SK-N-SH (cell line): ENCODE measurements at regions of chr1 and their contacts with region 1.

Region 1: DNA sequence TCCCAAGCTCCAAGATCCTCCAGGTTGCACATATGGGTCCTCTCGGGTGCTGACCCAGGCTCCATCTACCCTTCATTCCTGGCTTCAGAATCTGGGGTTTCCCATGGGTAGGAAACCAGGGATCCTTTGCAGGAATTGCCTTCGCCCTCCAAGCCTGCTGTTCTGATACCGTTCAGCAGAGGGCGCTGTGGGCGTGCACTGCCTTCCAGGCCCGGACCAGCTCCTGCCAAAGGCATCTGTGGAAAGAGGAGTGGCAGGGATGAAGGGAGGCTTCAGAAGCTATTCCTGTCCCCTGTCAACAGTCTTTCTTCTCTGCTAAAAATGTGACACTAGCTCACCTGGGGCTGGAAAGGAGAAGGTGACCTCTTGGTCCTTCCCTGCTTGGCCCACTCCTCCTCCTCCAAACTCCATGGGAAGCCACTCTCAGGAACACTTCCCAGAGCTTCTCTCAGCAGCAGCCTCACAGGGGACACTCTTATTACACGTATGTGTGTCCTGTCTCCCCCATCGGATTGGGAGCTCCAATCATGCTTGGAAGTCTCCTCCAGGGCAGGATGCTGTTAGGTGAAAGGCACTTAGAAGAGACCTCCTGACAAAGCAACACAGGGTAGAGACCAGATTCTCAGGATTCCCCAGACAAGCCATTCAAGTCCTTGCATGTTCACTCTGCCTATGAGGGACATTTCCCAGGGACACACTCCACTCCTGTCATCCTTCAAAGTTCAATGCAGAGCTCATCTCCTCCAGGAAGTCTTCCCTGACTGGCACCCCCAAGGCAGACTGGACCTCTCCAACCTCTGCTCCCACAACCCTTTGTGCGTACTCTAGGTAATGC is 71.3 kb downstream of the VWA5B1 start:
- DNase-seq: peak; percentile 79
- H3K4me3 ChIP-seq: no peak overlapping the region; a peak in 1 of 4 replicates
- H3K27ac ChIP-seq: no peak overlapping the region
- H3K4me1 ChIP-seq: peaks cover 0 to 19% of the 10 kb centered on the region in 2 experiments; a peak in 2 of 4 replicates
- H3K27me3 ChIP-seq: peaks cover 27% of the 10 kb centered on the region
- CTCF ChIP-seq: peak; percentile 70
- EP300 ChIP-seq: no peak
- RAD21 ChIP-seq: peak; percentile 77

Region 2: GRCh38 chr1:20233394-20233793 is 128.6 kb before region 1 on chr1:
- CTCF ChIA-PET with region 1: interaction called, 15 read pairs
- POLR2A ChIA-PET with region 1: no interaction called
- DNase-seq: peak; percentile 55
- H3K4me3 ChIP-seq: no peak overlapping the region
- H3K27ac ChIP-seq: no peak overlapping the region
- H3K4me1 ChIP-seq: peaks cover 0 to 13% of the 10 kb centered on the region in 2 experiments; a peak in 2 of 4 replicates
- H3K27me3 ChIP-seq: peaks cover 12% of the 10 kb centered on the region; the same call in 1 of the 2 replicates
- CTCF ChIP-seq: peak; percentile 52
- EP300 ChIP-seq: no peak
- RAD21 ChIP-seq: peak; percentile 55

Region 3: DNA sequence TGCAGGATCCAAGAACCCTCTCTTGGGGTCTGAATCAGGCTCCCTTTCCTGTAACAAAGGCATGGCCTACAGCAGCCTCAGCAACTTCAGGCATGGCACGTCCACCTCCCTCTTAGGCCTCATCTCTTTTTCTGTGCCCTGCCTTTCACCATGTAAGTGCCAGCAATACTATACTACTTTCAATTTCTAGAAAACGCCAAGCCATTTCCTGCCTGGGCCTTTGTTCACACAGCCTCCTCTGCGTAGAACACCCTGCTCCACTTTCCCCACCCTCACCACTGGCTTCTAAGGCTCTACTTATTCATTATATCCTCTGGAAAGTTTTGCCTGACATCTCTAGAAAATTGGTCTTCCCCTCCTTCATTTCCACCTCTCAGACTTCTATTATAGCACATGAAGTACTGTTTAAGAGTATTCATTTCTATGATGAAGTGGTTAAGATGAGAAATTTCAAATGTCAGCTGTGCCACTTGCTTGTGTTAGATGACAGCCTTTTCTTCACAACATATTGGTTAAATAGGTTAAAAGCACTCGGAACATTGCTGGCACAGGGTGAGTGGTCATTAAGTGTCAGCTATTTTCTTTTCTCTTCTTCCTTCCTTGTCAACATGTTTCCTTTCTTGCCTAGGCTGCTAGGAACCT is 112.9 kb before region 1 on chr1:
- CTCF ChIA-PET with region 1: no interaction called
- POLR2A ChIA-PET with region 1: no interaction called
- DNase-seq: no peak
- H3K4me3 ChIP-seq: no peak overlapping the region
- H3K27ac ChIP-seq: no peak overlapping the region
- H3K4me1 ChIP-seq: peaks cover 0 to 3% of the 10 kb centered on the region in 2 experiments; a peak in 1 of 4 replicates
- H3K27me3 ChIP-seq: no peaks in the 10 kb centered on the region
- CTCF ChIP-seq: no peak
- EP300 ChIP-seq: no peak
- RAD21 ChIP-seq: no peak

Region 4: GRCh38 chr1:20322081-20322824 is 39.8 kb before region 1 on chr1:
- CTCF ChIA-PET with region 1: interaction called, 12 read pairs
- POLR2A ChIA-PET with region 1: no interaction called
- DNase-seq: no peak
- H3K4me3 ChIP-seq: no peak overlapping the region
- H3K27ac ChIP-seq: no peak overlapping the region
- H3K4me1 ChIP-seq: peaks cover 0 to 41% of the 10 kb centered on the region in 2 experiments; a peak in 2 of 4 replicates
- H3K27me3 ChIP-seq: peaks cover 5% of the 10 kb centered on the region; the same call in 1 of the 2 replicates
- CTCF ChIP-seq: no peak
- EP300 ChIP-seq: no peak
- RAD21 ChIP-seq: no peak

Region 5: DNA sequence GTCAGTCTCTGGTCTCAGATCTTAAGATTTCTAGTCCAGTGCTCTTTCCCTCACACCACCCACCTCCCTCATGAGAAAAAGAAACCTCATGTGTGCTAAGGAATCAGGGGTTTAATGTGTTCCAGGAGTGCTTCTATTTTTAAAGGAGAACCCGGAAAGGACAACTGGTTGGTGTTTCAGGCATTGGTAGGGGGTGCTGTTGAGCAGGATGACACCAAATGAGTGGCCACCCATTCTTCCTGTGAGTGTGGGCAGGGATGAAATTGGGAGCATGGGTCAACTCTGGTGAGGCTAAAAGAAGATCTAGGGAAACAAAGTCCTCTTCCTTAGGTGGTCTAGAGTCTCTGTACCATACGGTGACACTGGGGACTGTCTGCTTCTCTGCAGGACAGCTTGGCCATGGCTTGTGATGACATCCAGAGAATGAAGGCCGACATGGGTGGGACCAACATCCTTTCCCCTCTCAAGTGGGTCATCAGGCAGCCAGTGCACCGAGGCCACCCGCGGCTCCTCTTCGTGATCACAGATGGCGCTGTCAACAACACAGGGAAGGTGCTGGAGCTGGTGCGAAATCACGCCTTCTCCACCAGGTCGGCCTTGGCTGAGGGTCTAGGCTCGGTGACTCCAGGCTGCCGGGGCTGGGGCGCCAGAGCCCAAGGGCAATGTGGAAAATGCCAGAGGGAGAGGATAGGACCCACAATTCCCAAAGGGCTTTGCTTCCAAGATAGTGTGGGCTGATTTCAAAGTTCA is 32.1 kb before region 1 on chr1:
- CTCF ChIA-PET with region 1: interaction called, 12 read pairs
- POLR2A ChIA-PET with region 1: no interaction called
- DNase-seq: no peak
- H3K4me3 ChIP-seq: no peak overlapping the region
- H3K27ac ChIP-seq: no peak overlapping the region
- H3K4me1 ChIP-seq: peaks cover 0 to 15% of the 10 kb centered on the region in 2 experiments; a peak in 2 of 4 replicates
- H3K27me3 ChIP-seq: no peaks in the 10 kb centered on the region
- CTCF ChIP-seq: peak; percentile 19; the same call in 1 of the 2 replicates
- EP300 ChIP-seq: no peak
- RAD21 ChIP-seq: peak; percentile 12; the same call in 1 of the 2 replicates

Region 6: DNA sequence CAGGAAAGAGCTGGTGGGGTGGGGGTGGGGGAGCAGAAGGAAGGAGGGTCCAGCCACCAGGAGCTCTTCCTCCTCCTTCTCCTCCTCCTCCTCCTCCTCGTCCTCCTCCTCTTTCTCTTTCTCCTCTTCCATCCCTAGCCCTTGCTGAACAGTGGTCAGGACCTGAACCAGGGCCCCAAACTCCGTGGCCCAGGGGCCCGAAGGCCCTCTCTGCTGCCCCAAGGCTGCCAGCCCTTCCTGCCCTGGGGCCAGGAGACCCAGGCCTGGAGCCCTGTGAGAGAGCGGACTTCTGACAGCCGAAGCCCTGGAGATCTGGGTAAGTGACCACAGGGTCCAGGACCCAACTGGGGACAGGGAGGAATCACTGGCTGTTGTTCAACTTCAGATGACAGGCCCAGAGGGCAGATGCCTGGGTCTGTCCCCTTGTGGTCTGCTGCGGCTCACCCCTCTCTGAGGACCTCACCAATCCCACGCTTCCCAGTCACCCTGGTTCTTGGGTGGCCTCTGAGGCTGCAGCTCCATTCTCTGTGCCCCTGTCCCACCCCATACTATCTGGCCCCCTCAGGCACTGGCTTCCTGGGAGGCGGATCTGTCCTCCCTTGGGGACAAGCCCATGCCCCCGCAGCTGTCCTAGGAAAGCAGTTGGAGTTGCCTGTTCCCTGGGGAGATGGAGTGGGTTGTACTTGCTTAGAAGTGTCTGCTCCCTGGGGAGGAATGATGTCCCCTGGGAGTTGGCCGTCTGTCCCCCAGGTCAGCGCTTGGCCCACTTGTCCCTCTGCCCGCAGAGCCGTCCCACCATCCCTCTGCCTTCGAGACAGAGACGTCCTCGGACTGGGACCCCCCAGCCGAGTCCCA is 19.5 kb before region 1 on chr1:
- CTCF ChIA-PET with region 1: interaction called, 13 read pairs
- POLR2A ChIA-PET with region 1: no interaction called
- DNase-seq: peak; percentile 51
- H3K4me3 ChIP-seq: no peak overlapping the region; a peak in 1 of 4 replicates
- H3K27ac ChIP-seq: peak overlapping the region in 1 of 2 experiments; percentile 81; a peak in 1 of 4 replicates
- H3K4me1 ChIP-seq: peaks cover 0 to 30% of the 10 kb centered on the region in 2 experiments; a peak in 2 of 4 replicates
- H3K27me3 ChIP-seq: no peaks in the 10 kb centered on the region
- CTCF ChIP-seq: no peak
- EP300 ChIP-seq: no peak
- RAD21 ChIP-seq: no peak

Region 7: DNA sequence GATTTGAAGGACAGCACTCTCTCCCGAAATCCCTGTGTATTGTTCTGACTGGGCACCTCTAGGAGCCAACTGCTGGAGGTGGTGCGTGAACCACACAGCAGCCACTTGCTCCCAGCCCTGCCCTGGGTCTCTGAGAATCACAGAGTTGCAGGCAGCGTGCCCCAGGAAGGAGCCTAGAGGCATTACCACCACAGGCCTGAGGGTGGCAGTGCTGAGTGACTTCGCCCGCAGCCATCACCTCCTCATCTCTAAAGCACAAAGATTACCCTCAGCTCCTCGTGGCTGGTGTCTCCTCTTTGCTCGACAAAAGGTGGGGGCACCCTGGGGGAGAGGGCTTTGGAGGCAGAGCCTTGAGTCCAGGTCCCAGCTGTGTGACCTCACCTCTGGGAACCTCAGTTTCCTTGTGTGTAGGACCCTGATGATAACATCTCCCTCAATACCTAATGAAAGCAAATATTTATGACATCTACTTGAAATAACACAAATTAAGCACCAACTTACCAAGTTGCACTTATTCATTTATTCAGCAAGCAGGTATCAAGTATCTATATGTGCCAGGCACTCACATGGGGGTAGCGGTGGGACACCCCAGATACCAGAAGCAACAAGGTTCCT is 15.0 kb after region 1 on chr1:
- CTCF ChIA-PET with region 1: interaction called, 38 read pairs
- POLR2A ChIA-PET with region 1: no interaction called
- DNase-seq: peak; percentile 75
- H3K4me3 ChIP-seq: no peak overlapping the region
- H3K27ac ChIP-seq: no peak overlapping the region
- H3K4me1 ChIP-seq: no peaks in the 10 kb centered on the region; a peak in 1 of 4 replicates
- H3K27me3 ChIP-seq: no peaks in the 10 kb centered on the region
- CTCF ChIP-seq: peak; percentile 76
- EP300 ChIP-seq: no peak
- RAD21 ChIP-seq: peak; percentile 70

Region 8: DNA sequence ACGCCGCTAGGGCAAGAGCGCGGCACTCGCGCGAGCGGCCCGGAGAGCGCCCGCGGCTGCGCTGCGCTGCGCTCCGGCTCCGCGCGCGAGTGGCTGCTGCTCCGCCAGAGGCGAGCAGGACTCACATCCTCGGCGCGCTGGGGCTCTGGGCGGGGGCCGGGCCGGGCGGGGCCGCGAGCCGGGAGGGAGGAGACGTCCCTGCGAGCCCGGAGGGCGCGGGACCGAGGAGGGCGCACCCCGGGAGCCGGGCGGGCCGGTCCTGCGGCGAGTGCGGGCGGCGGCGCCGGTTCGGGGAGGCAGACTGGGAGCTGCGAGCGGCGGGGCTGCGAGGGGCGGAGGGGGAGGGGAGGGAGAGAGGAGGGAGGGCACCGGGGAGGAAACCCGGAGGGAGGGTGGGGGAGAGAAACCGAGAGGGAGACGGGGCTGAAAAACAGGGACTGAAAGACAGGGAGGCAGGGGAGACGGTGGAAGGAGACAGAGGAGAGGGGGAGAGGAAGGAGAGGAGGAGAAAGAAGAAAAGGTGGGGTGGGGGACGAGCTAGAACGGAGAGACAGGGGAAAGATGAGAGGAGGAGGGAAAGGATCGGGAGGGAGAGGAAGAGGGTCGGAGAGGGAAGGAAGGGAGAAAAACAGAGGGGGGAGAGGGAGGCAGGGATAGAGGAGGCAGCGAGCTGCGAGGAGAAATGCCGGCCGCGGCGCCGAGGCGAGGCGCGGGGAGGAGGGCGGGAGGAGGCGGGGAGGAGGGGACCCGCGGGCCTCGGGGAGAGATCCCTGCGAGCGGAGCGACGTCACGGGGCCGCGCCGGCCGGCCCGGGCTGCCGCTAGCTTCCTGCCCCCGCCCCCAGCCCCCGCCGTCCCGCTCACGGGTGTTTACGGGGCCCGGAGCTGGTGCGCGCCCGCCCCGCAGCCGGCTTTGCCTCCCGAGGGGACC is 123.8 kb after region 1 on chr1 and contains the start of gene CAMK2N1:
- CTCF ChIA-PET with region 1: interaction called, 148 read pairs
- POLR2A ChIA-PET with region 1: no interaction called
- DNase-seq: peak; percentile 89
- H3K4me3 ChIP-seq: peak within 1 kb of the TSS; percentile 68 to 74
- H3K27ac ChIP-seq: peak within 1 kb of the TSS; percentile 56 to 88
- H3K4me1 ChIP-seq: peaks cover 0 to 25% of the 10 kb centered on the region in 2 experiments; a peak in 2 of 4 replicates
- H3K27me3 ChIP-seq: 0 out of 2 replicates have a peak, but pooled peaks cover 3% of the 10 kb centered on the region
- CTCF ChIP-seq: no peak
- EP300 ChIP-seq: no peak
- RAD21 ChIP-seq: no peak
- polyA plus RNA-seq, gene CAMK2N1: 2.8 and 5.3 TPM in 2 replicates